ENCODE measurements at regions of chr6 and their contacts with region 1.

Region 1: DNA sequence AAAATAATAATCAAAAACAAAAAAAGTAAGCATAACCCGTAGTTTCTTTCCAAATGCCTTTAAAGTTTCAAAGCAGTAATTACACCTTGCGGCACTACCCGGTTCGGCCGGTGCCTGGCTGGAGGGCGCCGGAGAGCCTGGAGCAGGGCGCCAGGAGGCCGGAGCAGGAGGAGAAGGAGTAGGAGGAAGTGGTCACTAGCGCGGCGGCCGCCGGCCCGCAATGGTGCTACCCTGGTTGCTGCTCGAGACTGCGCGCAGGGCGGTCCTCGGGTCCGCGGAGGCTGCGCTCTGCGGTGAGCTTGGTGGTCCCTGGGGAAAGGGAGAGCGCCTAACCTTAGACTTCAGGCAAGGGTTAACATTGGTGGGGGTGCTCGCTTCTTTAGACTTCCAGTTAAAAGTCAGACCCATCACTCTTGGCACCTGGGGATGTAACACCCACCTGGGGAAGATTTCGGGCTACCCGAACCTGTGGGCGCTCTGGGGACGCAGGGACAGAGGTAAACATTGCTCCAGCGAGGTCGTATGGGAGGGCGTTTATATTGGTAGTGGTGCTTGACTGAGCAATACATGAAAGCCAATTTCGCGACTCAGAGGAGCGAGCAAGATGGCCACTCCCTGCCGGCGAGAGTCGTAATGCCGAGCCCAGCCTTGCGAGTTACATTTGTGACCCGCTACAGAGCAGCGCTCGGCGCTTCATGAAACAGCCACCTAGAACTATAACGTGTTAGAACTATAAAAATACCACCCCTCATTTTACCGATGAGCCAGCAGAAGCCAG is 5.8 kb upstream of the USP45 start:
- DNase-seq: peak; percentile 87
- ATAC-seq: peak; percentile 89
- H3K4me3 Mint-ChIP-seq: peak overlapping the region; percentile 87
- H3K27ac Mint-ChIP-seq: peak overlapping the region; percentile 96
- H3K4me1 Mint-ChIP-seq: peaks cover 31% of the 10 kb centered on the region
- H3K27me3 Mint-ChIP-seq: no peaks in the 10 kb centered on the region
- CTCF ChIP-seq: peak; percentile 90

Region 2: DNA sequence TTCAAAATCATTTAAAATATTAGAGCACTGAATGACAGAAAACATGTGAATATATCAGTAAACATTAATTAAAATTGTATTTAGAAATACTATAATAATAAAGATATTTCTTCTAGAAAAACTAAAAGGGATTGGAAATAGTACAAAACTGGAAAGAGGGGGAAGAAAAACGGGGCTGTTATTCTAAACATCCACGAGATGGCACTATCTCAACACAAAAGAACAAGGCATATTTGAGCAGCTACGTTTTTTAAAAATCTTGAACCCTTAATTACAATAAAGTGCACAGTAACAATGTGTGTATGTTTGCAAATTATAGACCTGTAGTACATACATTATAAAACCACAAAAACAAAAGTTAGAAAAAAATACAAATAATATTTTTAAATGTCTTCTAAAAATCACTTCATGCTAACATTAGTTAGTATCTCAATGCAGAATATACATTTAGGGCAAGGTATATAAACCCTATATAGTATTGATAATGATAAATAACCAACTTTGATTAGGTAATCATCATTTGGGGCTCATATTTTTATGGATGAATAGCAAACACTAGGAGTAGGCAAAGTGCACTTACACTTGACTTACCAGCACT is 53.4 kb before region 1 on chr6:
- CTCF ChIA-PET with region 1: interaction called, 3 read pairs
- POLR2A ChIA-PET with region 1: no interaction called
- intact Hi-C with region 1: loop called (anchors 5 kb)
- DNase-seq: no peak
- ATAC-seq: no peak
- H3K4me3 Mint-ChIP-seq: no peak overlapping the region
- H3K27ac Mint-ChIP-seq: no peak overlapping the region
- H3K4me1 Mint-ChIP-seq: no peaks in the 10 kb centered on the region
- H3K27me3 Mint-ChIP-seq: no peaks in the 10 kb centered on the region
- CTCF ChIP-seq: peak; percentile 88

Region 3: GRCh38 chr6:99568103-99568933 is 47.3 kb after region 1 on chr6 and contains the start of gene CCNC:
- CTCF ChIA-PET with region 1: interaction called, 5 read pairs
- POLR2A ChIA-PET with region 1: interaction called, 19 read pairs
- intact Hi-C with region 1: loop called (anchors 2 kb)
- DNase-seq: peak; percentile 94
- ATAC-seq: peak; percentile 98
- H3K4me3 Mint-ChIP-seq: peak within 1 kb of the TSS; percentile 97
- H3K27ac Mint-ChIP-seq: peak within 1 kb of the TSS; percentile 96
- H3K4me1 Mint-ChIP-seq: peaks cover 34% of the 10 kb centered on the region
- H3K27me3 Mint-ChIP-seq: no peaks in the 10 kb centered on the region
- CTCF ChIP-seq: no peak
- total RNA-seq, gene CCNC: 72.3 to 75.4 TPM